Mammary epithelial cell (primary cell): ENCODE measurements at regions of chr11 and their contacts with region 1.

Region 1: GRCh38 chr11:72924568-72925190 is 110.5 kb downstream of the ATG16L2 start:
- DNase-seq: peak; percentile 21
- H3K4me3 ChIP-seq: no peak overlapping the region
- H3K27ac ChIP-seq: no peak overlapping the region
- H3K4me1 ChIP-seq: no peaks in the 10 kb centered on the region
- H3K27me3 ChIP-seq: no peaks in the 10 kb centered on the region
- CTCF ChIP-seq: peak; percentile 64 to 67

Region 2: GRCh38 chr11:73141848-73142286 is 217.2 kb after region 1 on chr11:
- CTCF ChIA-PET with region 1: interaction called, 3 read pairs
- dilution Hi-C with region 1: no loop called
- in situ Hi-C with region 1: no loop called
- intact Hi-C with region 1: loop called (anchors 1 kb)
- DNase-seq: peak; percentile 64
- H3K4me3 ChIP-seq: peak overlapping the region; percentile 92 to 99 (median 98)
- H3K27ac ChIP-seq: peak overlapping the region; percentile 49
- H3K4me1 ChIP-seq: peaks cover 20% of the 10 kb centered on the region
- H3K27me3 ChIP-seq: no peaks in the 10 kb centered on the region
- CTCF ChIP-seq: no peak

Region 3: GRCh38 chr11:73157053-73158010 is 232.7 kb after region 1 on chr11:
- CTCF ChIA-PET with region 1: no interaction called
- dilution Hi-C with region 1: no loop called
- in situ Hi-C with region 1: loop called in 1 of 2 experiments (anchors 25 kb)
- intact Hi-C with region 1: no loop called
- DNase-seq: no peak
- H3K4me3 ChIP-seq: no peak overlapping the region
- H3K27ac ChIP-seq: no peak overlapping the region
- H3K4me1 ChIP-seq: peaks cover 8% of the 10 kb centered on the region
- H3K27me3 ChIP-seq: no peaks in the 10 kb centered on the region
- CTCF ChIP-seq: no peak

Region 4: DNA sequence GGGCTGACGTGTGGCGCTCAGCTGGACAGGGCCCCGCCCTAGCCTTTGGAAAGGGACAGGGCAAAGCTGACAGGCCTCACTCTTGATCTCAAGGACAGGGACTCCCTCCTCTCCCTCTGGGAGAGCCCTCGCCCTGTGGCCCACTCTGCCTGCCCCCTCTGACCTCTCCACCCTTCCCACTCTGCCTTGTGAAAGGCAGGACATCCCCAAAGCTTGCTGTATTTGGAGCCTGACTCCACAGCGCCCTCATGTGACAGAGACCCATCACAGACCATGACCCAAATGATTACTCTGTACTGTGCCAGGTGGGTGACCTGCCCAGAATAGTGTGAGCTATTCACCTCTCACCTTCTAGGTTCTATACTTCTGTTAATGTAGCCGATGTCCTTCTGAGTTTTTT is 312.2 kb after region 1 on chr11:
- CTCF ChIA-PET with region 1: no interaction called
- dilution Hi-C with region 1: no loop called
- in situ Hi-C with region 1: no loop called
- intact Hi-C with region 1: loop called (anchors 1 kb)
- DNase-seq: peak; percentile 48
- H3K4me3 ChIP-seq: no peak overlapping the region
- H3K27ac ChIP-seq: no peak overlapping the region
- H3K4me1 ChIP-seq: peaks cover 43% of the 10 kb centered on the region
- H3K27me3 ChIP-seq: no peaks in the 10 kb centered on the region
- CTCF ChIP-seq: peak; percentile 83 to 85

Region 5: GRCh38 chr11:73242251-73243079 is 317.8 kb after region 1 on chr11:
- CTCF ChIA-PET with region 1: no interaction called
- dilution Hi-C with region 1: no loop called
- in situ Hi-C with region 1: no loop called
- intact Hi-C with region 1: loop called (anchors 1 kb)
- DNase-seq: peak; percentile 63
- H3K4me3 ChIP-seq: no peak overlapping the region
- H3K27ac ChIP-seq: no peak overlapping the region
- H3K4me1 ChIP-seq: peaks cover 45% of the 10 kb centered on the region
- H3K27me3 ChIP-seq: no peaks in the 10 kb centered on the region
- CTCF ChIP-seq: peak; percentile 96 to 99

Region 6: GRCh38 chr11:73288873-73289707 is 364.4 kb after region 1 on chr11:
- CTCF ChIA-PET with region 1: no interaction called
- dilution Hi-C with region 1: no loop called
- in situ Hi-C with region 1: no loop called
- intact Hi-C with region 1: loop called (anchors 1 kb)
- DNase-seq: peak; percentile 87
- H3K4me3 ChIP-seq: no peak overlapping the region
- H3K27ac ChIP-seq: peak overlapping the region; percentile 30
- H3K4me1 ChIP-seq: peaks cover 15% of the 10 kb centered on the region
- H3K27me3 ChIP-seq: no peaks in the 10 kb centered on the region
- CTCF ChIP-seq: peak; percentile 81 to 98